T-cell (primary cell): ENCODE measurements at regions of chr19 and their contacts with region 1.

Region 1: DNA sequence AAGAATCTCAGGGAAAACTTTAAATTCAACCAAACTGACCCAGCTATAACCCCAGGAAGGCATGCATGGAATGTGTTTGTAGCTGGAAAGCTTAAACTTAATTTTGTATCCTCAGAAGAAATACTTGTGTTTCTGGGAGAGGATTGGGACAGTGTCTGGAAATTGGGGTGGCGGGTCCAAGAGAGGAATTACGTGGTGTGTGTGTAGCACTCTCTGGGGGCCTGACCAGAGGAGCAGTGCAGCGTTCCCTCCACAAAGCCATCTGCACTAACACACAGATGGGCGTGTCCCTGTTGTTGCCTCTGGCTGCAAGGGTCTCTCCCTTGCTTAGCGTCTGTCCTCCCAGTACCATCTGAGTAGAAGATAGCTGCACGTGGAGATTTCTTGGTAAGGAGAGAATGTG is 6.4 kb downstream of the GARRE1 start:
- DNase-seq: no peak
- ATAC-seq: no peak
- H3K4me3 ChIP-seq: no peak overlapping the region
- H3K4me3 Mint-ChIP-seq: no peak overlapping the region
- H3K27ac ChIP-seq: no peak overlapping the region
- H3K27ac Mint-ChIP-seq: peak overlapping the region; percentile 38 to 73
- H3K4me1 ChIP-seq: peaks cover 20 to 37% of the 10 kb centered on the region in 2 experiments
- H3K4me1 Mint-ChIP-seq: peaks cover 68 to 73% (median 71%) of the 10 kb centered on the region in 3 donors
- H3K27me3 ChIP-seq: no peaks in the 10 kb centered on the region
- H3K27me3 Mint-ChIP-seq: no peaks in the 10 kb centered on the region

Region 2: DNA sequence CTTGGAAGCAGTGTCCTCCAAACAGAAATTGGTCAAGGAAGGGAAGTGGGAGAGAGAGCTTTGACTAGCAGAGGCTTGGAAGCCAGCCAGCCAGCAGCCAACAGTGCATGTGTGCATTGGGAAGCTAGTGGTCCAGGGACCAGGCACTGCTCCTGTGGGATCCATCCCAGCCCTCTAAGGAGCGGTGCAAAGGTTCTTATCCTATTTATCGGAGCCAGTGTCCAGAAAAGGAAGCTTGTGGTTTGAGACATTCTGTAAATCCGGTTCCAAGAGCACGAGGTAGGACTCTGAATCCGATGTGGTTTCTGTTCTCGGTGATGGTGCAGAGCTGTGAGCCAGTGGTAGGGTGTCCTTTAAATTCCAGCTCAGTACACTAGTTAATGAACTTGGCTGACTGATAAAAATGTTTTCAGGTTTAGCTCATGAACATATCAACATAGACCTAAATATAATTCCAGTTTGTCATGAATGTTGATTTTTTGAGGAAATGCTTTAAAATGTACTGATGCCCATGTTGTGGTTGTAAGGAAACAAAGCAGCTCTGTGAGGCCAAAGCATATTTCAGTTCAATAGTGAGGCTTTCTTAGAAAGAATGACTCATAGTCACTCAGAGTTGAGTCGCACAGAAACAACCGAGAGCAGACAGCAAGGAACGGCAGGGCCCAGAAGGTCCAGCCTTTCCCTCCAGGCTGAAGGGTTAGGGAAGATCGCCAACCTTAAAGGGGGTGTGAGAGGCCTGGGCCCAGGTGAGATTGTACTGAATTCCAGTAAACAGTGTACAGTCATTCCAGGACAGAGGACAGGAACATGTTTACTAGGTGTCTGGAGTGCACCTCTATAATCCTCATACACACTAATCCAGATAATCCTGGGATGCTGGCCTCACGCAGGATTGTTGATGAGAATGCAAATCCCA is 27.9 kb before region 1 on chr19:
- CTCF ChIA-PET with region 1: no interaction called
- POLR2A ChIA-PET with region 1: interaction called in 1 of 2 experiments, 10 read pairs
- DNase-seq: no peak
- ATAC-seq: peak; percentile 56 to 79 (median 72)
- H3K4me3 ChIP-seq: no peak overlapping the region
- H3K4me3 Mint-ChIP-seq: peak overlapping the region in 2 of 3 donors; percentile 25 to 53
- H3K27ac ChIP-seq: no peak overlapping the region
- H3K27ac Mint-ChIP-seq: peak overlapping the region; percentile 69 to 92
- H3K4me1 ChIP-seq: peaks cover 0 to 10% of the 10 kb centered on the region in 2 experiments
- H3K4me1 Mint-ChIP-seq: peaks cover 11 to 19% (median 16%) of the 10 kb centered on the region in 3 donors
- H3K27me3 ChIP-seq: no peaks in the 10 kb centered on the region
- H3K27me3 Mint-ChIP-seq: no peaks in the 10 kb centered on the region